Naive thymus-derived CD4-positive, alpha-beta T cell (primary cell): ENCODE measurements at regions of chr18 and their contacts with region 1.

Region 1: GRCh38 chr18:32884543-32884942 is 111.7 kb upstream of the KLHL14 start:
- DNase-seq: no peak
- ATAC-seq: peak; percentile 54
- H3K4me3 ChIP-seq: no peak overlapping the region
- H3K4me3 Mint-ChIP-seq: no peak overlapping the region
- H3K27ac ChIP-seq: no peak overlapping the region
- H3K27ac Mint-ChIP-seq: no peak overlapping the region
- H3K4me1 ChIP-seq: no peaks in the 10 kb centered on the region
- H3K4me1 Mint-ChIP-seq: no peaks in the 10 kb centered on the region
- H3K27me3 ChIP-seq: no peaks in the 10 kb centered on the region
- H3K27me3 Mint-ChIP-seq: no peaks in the 10 kb centered on the region

Region 2: GRCh38 chr18:32937007-32937540 is 52.5 kb after region 1 on chr18:
- CTCF ChIA-PET with region 1: no interaction called
- POLR2A ChIA-PET with region 1: no interaction called
- intact Hi-C with region 1: loop called in 1 of 2 experiments (anchors 10 kb)
- DNase-seq: no peak
- ATAC-seq: no peak
- H3K4me3 ChIP-seq: no peak overlapping the region
- H3K4me3 Mint-ChIP-seq: peak overlapping the region in 1 of 10 donors; percentile 11
- H3K27ac ChIP-seq: no peak overlapping the region
- H3K27ac Mint-ChIP-seq: no peak overlapping the region
- H3K4me1 ChIP-seq: no peaks in the 10 kb centered on the region
- H3K4me1 Mint-ChIP-seq: no peaks in the 10 kb centered on the region
- H3K27me3 ChIP-seq: no peaks in the 10 kb centered on the region
- H3K27me3 Mint-ChIP-seq: no peaks in the 10 kb centered on the region